A549 (cell line): ENCODE measurements at regions of chr12 and their contacts with region 1.

Region 1: DNA sequence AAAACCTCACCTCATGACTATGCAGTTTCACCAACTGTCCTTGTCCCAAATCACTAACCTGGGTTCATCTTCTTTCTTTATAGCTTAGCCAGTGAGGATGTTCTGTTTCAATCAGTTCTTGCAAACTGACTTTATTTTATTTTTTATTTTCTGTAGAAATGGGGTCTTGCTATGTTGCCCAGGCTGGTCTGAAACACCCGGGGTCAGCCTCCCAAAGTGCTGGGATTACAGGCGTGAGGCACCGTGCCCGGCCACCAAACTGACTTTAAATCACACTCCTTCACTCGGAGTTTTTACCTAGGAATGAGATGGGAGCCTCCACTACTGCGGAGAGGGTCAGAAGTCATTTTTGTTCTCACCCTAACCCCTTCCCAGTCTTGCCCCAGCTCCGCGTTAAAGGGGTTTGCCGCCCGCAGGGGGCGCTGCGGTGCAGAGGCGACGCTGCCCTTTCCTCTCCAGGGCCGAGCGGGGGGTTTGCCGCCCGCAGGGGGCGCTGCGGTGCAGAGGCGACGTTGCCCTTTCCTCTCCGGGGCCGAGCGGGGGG is 7.0 kb upstream of the B4GALNT3 start:
- DNase-seq: no peak
- ATAC-seq: 0 out of 6 replicates have a peak, but pooled peaks of 1 of the 2 experiments have one; percentile 33
- H3K4me3 ChIP-seq: no peak overlapping the region
- H3K27ac ChIP-seq: no peak overlapping the region
- H3K4me1 ChIP-seq: no peaks in the 10 kb centered on the region
- CTCF ChIP-seq: no peak
- EP300 ChIP-seq: no peak
- POLR2A ChIP-seq: no peak
- RAD21 ChIP-seq: no peak; a peak in 2 of 5 replicates

Region 2: DNA sequence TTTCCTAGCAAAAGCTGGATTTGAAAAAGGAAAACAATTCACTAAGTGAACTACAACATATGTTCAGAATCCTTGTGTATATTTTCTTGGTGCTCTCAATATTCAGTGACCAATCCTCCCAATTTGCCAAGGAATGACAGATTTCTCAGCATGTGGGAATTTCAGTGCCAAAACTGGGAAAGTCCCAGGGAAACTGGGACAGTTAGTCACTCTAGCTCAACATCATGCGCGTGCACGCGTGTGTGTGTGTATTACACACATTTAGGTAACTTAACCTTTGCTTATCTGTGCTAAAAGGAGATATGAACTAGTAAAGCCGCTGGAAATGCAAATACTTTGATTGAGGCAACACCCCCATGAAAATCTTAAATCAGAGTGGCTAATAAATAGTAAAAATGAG is 164.1 kb before region 1 on chr12:
- CTCF ChIA-PET with region 1: no interaction called
- POLR2A ChIA-PET with region 1: no interaction called
- DNase-seq: peak; percentile 4 to 17
- ATAC-seq: no peak
- H3K4me3 ChIP-seq: no peak overlapping the region
- H3K27ac ChIP-seq: no peak overlapping the region
- H3K4me1 ChIP-seq: no peaks in the 10 kb centered on the region; the same call in 2 of the 3 replicates
- CTCF ChIP-seq: no peak
- EP300 ChIP-seq: no peak
- POLR2A ChIP-seq: no peak
- RAD21 ChIP-seq: no peak

Region 3: GRCh38 chr12:473863-474577 is 21.3 kb after region 1 on chr12:
- CTCF ChIA-PET with region 1: interaction called, 35 read pairs
- POLR2A ChIA-PET with region 1: no interaction called
- DNase-seq: no peak
- ATAC-seq: peak in 1 of 2 experiments; percentile 17; a peak in 3 of 6 replicates
- H3K4me3 ChIP-seq: no peak overlapping the region
- H3K27ac ChIP-seq: no peak overlapping the region
- H3K4me1 ChIP-seq: peaks cover 7% of the 10 kb centered on the region; the same call in 2 of the 3 replicates
- CTCF ChIP-seq: no peak
- EP300 ChIP-seq: no peak
- POLR2A ChIP-seq: no peak
- RAD21 ChIP-seq: no peak

Region 4: GRCh38 chr12:538731-539539 is 86.2 kb after region 1 on chr12:
- CTCF ChIA-PET with region 1: interaction called, 42 read pairs
- POLR2A ChIA-PET with region 1: interaction called, 3 read pairs
- DNase-seq: peak in 1 of 2 experiments; percentile 55
- ATAC-seq: no peak; a peak in 2 of 6 replicates
- H3K4me3 ChIP-seq: no peak overlapping the region
- H3K27ac ChIP-seq: 0 out of 6 replicates have a peak overlapping the region, but pooled peaks of 1 of the 2 experiments have one; percentile 19
- H3K4me1 ChIP-seq: peaks cover 16% of the 10 kb centered on the region; the same call in 1 of the 3 replicates
- CTCF ChIP-seq: no peak
- EP300 ChIP-seq: no peak
- POLR2A ChIP-seq: no peak
- RAD21 ChIP-seq: no peak

Region 5: GRCh38 chr12:553205-554000 is 100.7 kb after region 1 on chr12:
- CTCF ChIA-PET with region 1: interaction called, 252 read pairs
- POLR2A ChIA-PET with region 1: no interaction called
- DNase-seq: no peak
- ATAC-seq: no peak
- H3K4me3 ChIP-seq: no peak overlapping the region
- H3K27ac ChIP-seq: peak overlapping the region; percentile 11 to 42; a peak in 3 of 6 replicates
- H3K4me1 ChIP-seq: peaks cover 13% of the 10 kb centered on the region; the same call in 2 of the 3 replicates
- CTCF ChIP-seq: no peak
- EP300 ChIP-seq: no peak
- POLR2A ChIP-seq: no peak
- RAD21 ChIP-seq: no peak